Heart right ventricle (tissue), 16 donors: ENCODE measurements at regions of chr1 and their contacts with region 1.

Region 1: DNA sequence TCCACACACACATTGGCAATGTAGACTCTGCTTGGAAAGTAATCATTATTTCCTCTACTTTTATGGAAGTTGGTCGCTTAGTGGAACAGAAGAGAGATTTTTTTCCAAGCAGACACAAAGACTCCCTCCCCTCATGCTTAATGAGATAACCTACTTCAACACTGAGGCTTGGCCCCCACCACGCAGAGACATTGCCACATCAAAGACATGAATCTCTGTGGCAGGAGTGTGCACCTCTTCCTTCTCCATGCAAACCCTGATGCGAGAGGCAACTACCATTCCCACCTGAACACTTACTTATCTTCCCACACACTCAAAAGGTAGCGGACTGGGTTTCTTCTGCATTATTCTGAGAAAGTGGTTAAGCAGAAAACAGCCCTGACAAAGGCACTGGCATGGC is 37.3 kb upstream of the LPAR3 start:
- DNase-seq: no peak
- ATAC-seq: no peak
- H3K4me3 ChIP-seq: no peak overlapping the region
- H3K27ac ChIP-seq: no peak overlapping the region
- H3K4me1 ChIP-seq: no peaks in the 10 kb centered on the region
- H3K27me3 ChIP-seq: peaks cover 0 to 6% (median 0%) of the 10 kb centered on the region in 7 donors
- CTCF ChIP-seq: no peak

Region 2: DNA sequence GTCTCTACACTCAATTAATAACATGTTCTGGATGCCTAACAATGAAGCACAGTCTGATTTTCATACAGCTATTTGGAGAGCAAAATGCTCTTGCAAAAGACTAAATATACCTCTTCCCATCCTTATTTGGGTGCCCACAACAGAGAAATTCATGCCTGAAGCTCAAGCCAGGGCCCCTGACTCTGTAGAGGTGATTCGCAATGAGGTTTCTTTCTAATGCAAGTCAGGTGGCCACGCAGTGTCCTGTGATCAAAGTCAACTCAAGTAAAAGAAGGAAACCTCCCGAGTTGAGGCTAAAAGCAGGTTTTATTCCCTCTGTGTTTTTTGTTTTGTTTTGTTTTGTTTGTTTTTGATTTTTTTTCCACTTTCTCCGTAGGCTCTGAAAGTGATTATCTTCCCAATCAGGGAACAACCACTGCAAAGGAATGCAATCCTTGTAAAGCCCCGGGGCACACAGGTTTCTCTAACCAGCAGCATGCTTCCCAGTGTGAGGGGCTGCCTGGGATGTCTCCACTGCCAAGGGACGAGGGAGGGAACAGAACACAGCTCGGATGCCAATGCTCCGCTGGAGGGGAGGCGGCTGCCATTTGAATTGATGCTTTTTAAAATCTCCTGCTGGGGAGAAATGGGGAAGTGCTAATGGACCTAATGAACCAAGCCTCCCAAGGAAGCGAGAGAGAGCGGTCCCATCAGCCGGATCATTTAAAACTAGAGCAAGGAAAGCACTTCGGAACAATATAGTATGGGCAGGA is 166.2 kb before region 1 on chr1:
- intact Hi-C with region 1: loop called in 2 of 10 experiments (anchors 5 kb)
- DNase-seq: no peak
- ATAC-seq: no peak
- H3K4me3 ChIP-seq: no peak overlapping the region
- H3K27ac ChIP-seq: no peak overlapping the region
- H3K4me1 ChIP-seq: peaks cover 0 to 8% (median 5%) of the 10 kb centered on the region in 9 donors
- H3K27me3 ChIP-seq: peaks cover 0 to 18% (median 7%) of the 10 kb centered on the region in 7 donors
- CTCF ChIP-seq: no peak

Region 3: DNA sequence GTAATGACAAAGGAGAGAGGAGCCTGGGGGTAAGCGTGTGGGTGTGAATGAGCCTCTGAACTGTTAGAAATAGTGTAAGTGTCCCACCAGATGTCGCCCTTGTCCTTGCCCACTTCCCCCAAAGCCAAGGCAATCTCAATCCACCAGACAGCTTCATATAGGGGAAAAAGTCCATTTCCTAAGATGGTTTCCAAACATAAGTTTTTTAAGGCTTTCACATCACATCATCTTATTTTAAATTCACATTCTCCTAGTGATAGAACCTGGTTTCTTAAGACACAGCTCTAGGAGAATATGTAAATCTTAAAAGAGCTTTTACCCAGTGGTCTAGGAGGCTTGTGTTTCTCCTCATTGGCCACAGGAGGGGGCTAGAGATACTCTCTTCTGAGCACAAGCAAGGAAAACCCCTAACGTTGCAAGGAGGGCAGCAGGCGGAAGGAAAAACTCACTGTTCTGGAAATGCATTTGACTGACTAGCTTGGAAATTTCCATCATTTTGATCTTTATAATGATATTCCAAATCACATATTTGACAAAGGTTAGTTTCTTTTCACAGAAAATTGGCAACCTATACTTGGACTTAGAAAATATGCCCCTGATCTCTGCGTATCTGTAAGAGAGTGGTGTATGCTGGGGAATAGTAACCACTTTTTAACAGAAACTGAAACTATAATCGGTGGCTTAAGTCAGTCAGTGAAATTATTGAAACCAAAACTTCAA is 14.6 kb after region 1 on chr1:
- intact Hi-C with region 1: no loop called
- DNase-seq: peak; percentile 25 to 79
- ATAC-seq: peak; percentile 93 to 99 (median 96)
- H3K4me3 ChIP-seq: peak overlapping the region in 9 of 10 donors; percentile 18 to 59 (median 50)
- H3K27ac ChIP-seq: peak overlapping the region in 8 of 10 donors; percentile 29 to 82 (median 68)
- H3K4me1 ChIP-seq: peaks cover 0 to 13% (median 5%) of the 10 kb centered on the region in 9 donors
- H3K27me3 ChIP-seq: peaks cover 0 to 4% (median 0%) of the 10 kb centered on the region in 7 donors
- CTCF ChIP-seq: peak; percentile 79 to 96 (median 92)

Region 4: GRCh38 chr1:85179522-85179921 is 249.2 kb after region 1 on chr1:
- intact Hi-C with region 1: no loop called
- DNase-seq: no peak
- ATAC-seq: no peak
- H3K4me3 ChIP-seq: no peak overlapping the region
- H3K27ac ChIP-seq: no peak overlapping the region
- H3K4me1 ChIP-seq: peaks cover 0 to 16% (median 4%) of the 10 kb centered on the region in 9 donors
- H3K27me3 ChIP-seq: no peaks in the 10 kb centered on the region
- CTCF ChIP-seq: no peak